ENCODE measurements at regions of chr5 and their contacts with region 1.

Region 1: DNA sequence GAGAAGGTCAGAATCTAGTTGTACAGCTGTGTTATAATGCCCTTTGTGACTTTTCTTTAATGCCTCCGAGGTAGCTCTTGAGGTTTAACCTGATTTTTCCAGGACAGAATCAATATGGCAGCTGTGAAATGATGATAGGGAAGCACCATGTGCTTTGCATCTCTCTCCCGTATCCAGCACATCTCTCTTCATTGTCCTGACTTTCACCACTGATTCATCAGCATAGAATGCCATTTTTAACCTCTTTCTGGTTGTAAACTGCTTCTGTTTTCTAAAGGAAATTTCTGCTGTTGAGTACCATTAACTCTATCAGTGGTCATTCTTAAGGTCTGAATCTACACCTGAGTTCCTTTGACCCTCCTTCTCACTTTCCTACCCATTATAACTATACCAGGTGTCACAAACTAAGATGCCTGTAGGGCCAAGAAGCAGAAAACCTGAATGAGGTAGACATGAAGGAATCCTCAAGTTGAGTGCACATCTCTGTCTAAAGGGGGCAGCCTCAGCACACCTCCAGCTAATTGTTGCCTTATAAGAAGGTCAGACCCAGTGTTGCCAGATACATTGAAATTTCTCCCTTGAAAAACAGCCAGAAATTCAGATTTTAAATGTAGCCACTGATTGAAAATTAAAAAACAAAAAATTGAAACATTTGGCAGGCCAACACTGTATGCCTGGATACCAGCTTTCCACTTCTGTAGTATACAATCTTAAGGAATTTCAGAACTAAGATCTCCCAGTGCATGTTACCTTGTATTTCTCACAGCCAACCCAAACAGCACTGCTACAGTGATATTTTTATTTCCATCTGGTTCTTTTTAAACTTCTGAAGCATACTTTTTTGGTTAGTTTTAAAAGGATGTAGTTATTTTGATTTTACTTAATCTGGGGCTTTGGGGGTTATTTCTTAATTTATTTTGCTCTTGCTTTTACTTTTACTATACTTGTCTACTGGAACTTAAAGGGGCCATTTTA is 35.8 kb upstream of the TLX3 start:
- DNase-seq: peak; percentile 41
- ATAC-seq: peak; percentile 99
- H3K4me3 Mint-ChIP-seq: no peak overlapping the region
- H3K27ac Mint-ChIP-seq: no peak overlapping the region
- H3K4me1 Mint-ChIP-seq: peaks cover 5% of the 10 kb centered on the region
- H3K27me3 Mint-ChIP-seq: no peaks in the 10 kb centered on the region
- CTCF ChIP-seq: no peak

Region 2: GRCh38 chr5:171261361-171261760 is 11.9 kb before region 1 on chr5:
- CTCF ChIA-PET with region 1: interaction called, 10 read pairs
- POLR2A ChIA-PET with region 1: no interaction called
- DNase-seq: no peak
- ATAC-seq: no peak
- H3K4me3 Mint-ChIP-seq: no peak overlapping the region
- H3K27ac Mint-ChIP-seq: no peak overlapping the region
- H3K4me1 Mint-ChIP-seq: no peaks in the 10 kb centered on the region
- H3K27me3 Mint-ChIP-seq: no peaks in the 10 kb centered on the region
- CTCF ChIP-seq: no peak

Region 3: DNA sequence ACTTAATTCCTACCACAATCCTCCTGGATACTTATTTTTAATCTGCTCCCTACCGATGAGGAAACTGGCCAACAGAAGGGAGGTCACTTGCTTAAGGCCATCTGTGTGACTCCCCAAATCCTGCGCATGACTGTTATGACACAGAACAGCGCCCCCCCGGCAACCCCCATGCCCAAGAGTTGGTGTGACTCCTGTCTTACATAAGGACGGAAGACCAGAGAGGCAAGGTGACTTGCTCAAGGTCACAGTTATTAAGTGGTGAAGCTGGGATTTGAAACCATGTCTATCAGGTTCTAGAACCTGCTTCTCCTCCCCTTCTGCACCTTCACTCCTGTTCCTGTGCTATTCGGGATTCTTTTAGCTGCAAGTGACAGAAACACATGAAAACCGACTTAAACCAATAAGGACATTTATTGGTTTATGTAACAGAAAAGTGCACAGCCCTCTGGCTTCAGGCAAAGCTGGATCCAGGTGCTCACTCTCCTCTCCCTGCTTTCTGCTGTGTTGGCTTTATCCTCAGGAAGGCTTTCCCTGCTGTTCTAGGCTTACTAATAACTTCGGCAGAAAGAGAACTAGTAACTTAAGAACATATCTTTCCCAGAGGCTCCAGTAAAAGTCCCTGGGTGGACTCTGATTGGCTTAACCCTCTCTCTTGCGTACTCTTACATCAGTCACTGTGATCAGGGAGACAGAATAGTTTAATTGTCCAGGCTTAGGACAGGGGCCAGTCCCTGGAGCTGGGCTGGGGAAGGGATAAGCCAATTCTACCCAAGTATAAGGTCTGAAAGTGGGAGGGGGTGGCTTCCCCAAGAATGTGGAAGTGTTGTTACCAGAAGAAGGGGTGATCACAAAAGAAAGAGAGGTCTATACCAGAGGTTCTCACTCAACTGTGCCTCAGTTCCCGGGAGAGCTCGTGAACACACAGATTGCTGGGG is 189.9 kb after region 1 on chr5:
- CTCF ChIA-PET with region 1: no interaction called
- POLR2A ChIA-PET with region 1: no interaction called
- DNase-seq: no peak
- ATAC-seq: no peak
- H3K4me3 Mint-ChIP-seq: no peak overlapping the region
- H3K27ac Mint-ChIP-seq: no peak overlapping the region
- H3K4me1 Mint-ChIP-seq: peaks cover 13% of the 10 kb centered on the region
- H3K27me3 Mint-ChIP-seq: no peaks in the 10 kb centered on the region
- CTCF ChIP-seq: no peak

Measured in WTC11 (cell line).